Activated T-helper 1 cell treated with anti-CD3 and anti-CD28 coated beads, Interleukin-12 subunit alpha, Interleukin-12 subunit beta, Interleukin-2, Interleukin-4 antibody, amounts not matched to agents 30 ng/mL and 10 ng/mL and 1 ng/mL, durations not matched to agents 14 hours and 24 hours and 36 hours (primary cell): ENCODE measurements at regions of chr7 and their contacts with region 1.

Region 1: DNA sequence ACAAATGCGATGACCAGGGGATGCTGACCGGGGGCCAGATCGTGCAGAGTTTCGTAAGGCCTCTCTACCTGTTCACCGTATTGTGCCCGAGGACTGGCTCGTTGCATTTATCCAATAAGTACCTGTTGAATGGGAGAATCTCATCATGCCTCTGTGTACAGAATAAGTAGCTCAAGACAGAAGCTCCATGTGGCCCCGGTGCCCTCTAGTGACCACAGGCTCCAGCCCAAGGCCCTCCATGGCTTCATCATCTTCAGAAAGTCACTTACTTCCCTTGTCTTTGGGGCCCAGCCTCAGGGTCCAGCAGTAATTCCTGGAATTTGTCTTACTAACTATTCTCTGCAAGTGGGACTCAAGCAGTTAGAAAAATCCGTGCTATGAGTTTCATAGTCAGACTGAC is 151.0 kb downstream of the CHN2 start:
- DNase-seq: no peak
- H3K4me3 Mint-ChIP-seq: no peak overlapping the region
- H3K27ac Mint-ChIP-seq: no peak overlapping the region
- H3K4me1 Mint-ChIP-seq: no peaks in the 10 kb centered on the region
- H3K27me3 Mint-ChIP-seq: peaks cover 17% of the 10 kb centered on the region

Region 2: DNA sequence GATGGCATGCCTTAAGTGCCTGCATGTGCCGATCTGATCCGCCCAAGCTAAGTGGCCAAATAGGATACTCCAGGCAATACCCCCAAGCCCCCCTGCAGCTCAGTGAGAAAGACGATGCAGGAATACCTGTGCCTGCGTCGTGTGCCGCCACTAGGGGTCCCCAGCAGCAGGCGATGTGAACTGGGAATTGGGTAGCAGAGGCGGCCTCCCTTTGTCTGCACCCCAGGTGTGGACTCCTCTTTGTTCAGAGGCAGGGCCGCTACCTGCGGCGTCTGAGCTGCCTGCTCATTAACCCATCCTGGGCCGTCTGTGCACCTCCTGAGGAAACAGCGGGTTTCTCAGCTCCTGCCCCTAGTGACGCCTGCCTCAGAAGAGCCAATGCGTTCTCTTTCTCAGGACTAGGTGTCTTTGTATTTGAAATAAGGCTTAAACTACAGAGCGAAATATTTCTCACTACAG is 155.8 kb before region 1 on chr7:
- intact Hi-C with region 1: loop called (anchors 1 kb)
- DNase-seq: no peak
- H3K4me3 Mint-ChIP-seq: no peak overlapping the region
- H3K27ac Mint-ChIP-seq: no peak overlapping the region
- H3K4me1 Mint-ChIP-seq: no peaks in the 10 kb centered on the region
- H3K27me3 Mint-ChIP-seq: peaks cover 39% of the 10 kb centered on the region

Region 3: GRCh38 chr7:29217113-29217512 is 128.5 kb before region 1 on chr7:
- intact Hi-C with region 1: no loop called
- DNase-seq: no peak
- H3K4me3 Mint-ChIP-seq: no peak overlapping the region
- H3K27ac Mint-ChIP-seq: no peak overlapping the region
- H3K4me1 Mint-ChIP-seq: no peaks in the 10 kb centered on the region
- H3K27me3 Mint-ChIP-seq: peaks cover 5% of the 10 kb centered on the region